T-cell (primary cell): ENCODE measurements at regions of chr16 and their contacts with region 1.

Region 1: DNA sequence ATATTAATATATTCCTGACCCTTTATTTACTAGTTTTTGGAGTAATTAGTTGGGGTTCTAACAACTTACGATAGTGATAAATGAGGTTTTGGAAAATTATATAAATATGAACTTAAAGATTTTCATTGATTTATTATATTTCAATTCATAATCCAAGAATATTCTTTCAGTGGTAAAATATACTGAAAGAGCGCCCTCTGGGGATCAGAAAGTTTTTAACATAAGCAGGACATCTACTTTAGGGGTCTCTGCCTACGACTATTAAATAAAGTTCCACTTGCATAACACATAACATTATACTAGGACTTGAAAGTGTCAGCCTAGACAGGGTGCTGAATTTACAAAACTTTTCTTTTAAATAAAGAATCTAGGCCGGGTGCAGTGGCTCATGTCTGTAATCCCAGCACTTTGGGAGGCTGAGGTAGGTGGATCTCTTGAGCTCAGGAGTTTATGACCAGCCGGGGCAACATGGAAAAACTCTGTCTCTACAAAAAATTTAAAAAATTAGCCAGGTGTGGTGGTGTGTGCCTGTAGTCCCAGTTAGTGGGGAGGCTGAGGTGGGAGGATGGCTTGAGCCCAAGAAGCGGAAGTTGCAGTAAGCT is 15.6 kb downstream of the RFWD3 start:
- DNase-seq: peak in 3 of 35 experiments; percentile 5 to 35 (median 16)
- ATAC-seq: no peak
- H3K4me3 ChIP-seq: no peak overlapping the region
- H3K4me3 Mint-ChIP-seq: no peak overlapping the region
- H3K27ac ChIP-seq: no peak overlapping the region
- H3K27ac Mint-ChIP-seq: no peak overlapping the region
- H3K4me1 ChIP-seq: peaks cover 3 to 20% of the 10 kb centered on the region in 2 experiments
- H3K4me1 Mint-ChIP-seq: peaks cover 31 to 41% (median 34%) of the 10 kb centered on the region in 3 donors
- H3K27me3 ChIP-seq: no peaks in the 10 kb centered on the region
- H3K27me3 Mint-ChIP-seq: no peaks in the 10 kb centered on the region

Region 2: GRCh38 chr16:74521691-74522090 is 129.4 kb before region 1 on chr16:
- CTCF ChIA-PET with region 1: no interaction called
- POLR2A ChIA-PET with region 1: interaction called in 1 of 2 experiments, 14 read pairs
- DNase-seq: no peak
- ATAC-seq: no peak
- H3K4me3 ChIP-seq: no peak overlapping the region
- H3K4me3 Mint-ChIP-seq: no peak overlapping the region
- H3K27ac ChIP-seq: no peak overlapping the region
- H3K27ac Mint-ChIP-seq: peak overlapping the region; percentile 12 to 47
- H3K4me1 ChIP-seq: no peaks in the 10 kb centered on the region
- H3K4me1 Mint-ChIP-seq: peaks cover 32 to 43% (median 41%) of the 10 kb centered on the region in 3 donors
- H3K27me3 ChIP-seq: no peaks in the 10 kb centered on the region
- H3K27me3 Mint-ChIP-seq: no peaks in the 10 kb centered on the region